BJ (cell line): ENCODE measurements at regions of chr13 and their contacts with region 1.

Region 1: GRCh38 chr13:41470196-41470595 is 12.8 kb downstream of the RGCC start:
- DNase-seq: no peak
- H3K4me3 ChIP-seq: no peak overlapping the region
- H3K27me3 ChIP-seq: no peaks in the 10 kb centered on the region
- CTCF ChIP-seq: no peak

Region 2: GRCh38 chr13:41458761-41459431 is 11.3 kb before region 1 on chr13:
- CTCF ChIA-PET with region 1: interaction called, 15 read pairs
- POLR2A ChIA-PET with region 1: no interaction called
- DNase-seq: no peak
- H3K4me3 ChIP-seq: peak overlapping the region; percentile 57
- H3K27me3 ChIP-seq: peaks cover 7% of the 10 kb centered on the region
- CTCF ChIP-seq: peak; percentile 86